PC-9 (cell line): ENCODE measurements at regions of chr2 and their contacts with region 1.

Region 1: GRCh38 chr2:223760838-223761502 is 76.4 kb downstream of the AP1S3 start:
- DNase-seq: peak; percentile 91 to 99
- H3K4me3 ChIP-seq: peak overlapping the region; percentile 42; the same call in 1 of the 2 replicates
- H3K27ac ChIP-seq: peak overlapping the region; percentile 96
- H3K4me1 ChIP-seq: peaks cover 42% of the 10 kb centered on the region
- H3K27me3 ChIP-seq: no peaks in the 10 kb centered on the region
- CTCF ChIP-seq: peak; percentile 60

Region 2: GRCh38 chr2:222976521-222977076 is 784.4 kb before region 1 on chr2:
- CTCF ChIA-PET with region 1: interaction called, 7 read pairs
- POLR2A ChIA-PET with region 1: no interaction called
- intact Hi-C with region 1: loop called (anchors 10 kb)
- DNase-seq: peak in 1 of 2 experiments; percentile 83
- H3K4me3 ChIP-seq: no peak overlapping the region
- H3K27ac ChIP-seq: no peak overlapping the region
- H3K4me1 ChIP-seq: peaks cover 42% of the 10 kb centered on the region
- H3K27me3 ChIP-seq: no peaks in the 10 kb centered on the region
- CTCF ChIP-seq: no peak

Region 3: DNA sequence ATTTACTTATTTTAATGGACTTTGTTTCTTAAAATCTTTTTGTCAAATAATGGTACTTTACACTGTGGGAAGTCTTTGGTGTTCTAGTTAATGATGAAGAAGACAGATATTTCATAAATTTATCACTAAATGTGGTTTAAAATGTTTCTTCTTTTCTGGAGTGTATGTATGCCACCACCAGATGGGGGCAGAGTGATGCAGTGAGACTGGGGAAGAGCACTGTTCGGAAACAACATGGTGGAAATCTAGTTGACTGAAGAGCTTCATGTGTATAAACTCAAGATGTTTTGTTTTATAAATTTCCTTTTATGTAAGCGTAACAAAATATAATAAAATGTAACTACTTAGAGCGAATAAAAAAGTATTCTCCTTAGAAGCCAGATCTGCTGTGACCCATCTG is 513.8 kb before region 1 on chr2:
- CTCF ChIA-PET with region 1: interaction called, 5 read pairs
- POLR2A ChIA-PET with region 1: no interaction called
- intact Hi-C with region 1: loop called (anchors 1 kb)
- DNase-seq: peak in 1 of 2 experiments; percentile 47
- H3K4me3 ChIP-seq: no peak overlapping the region
- H3K27ac ChIP-seq: no peak overlapping the region
- H3K4me1 ChIP-seq: no peaks in the 10 kb centered on the region
- H3K27me3 ChIP-seq: no peaks in the 10 kb centered on the region
- CTCF ChIP-seq: peak; percentile 93

Region 4: GRCh38 chr2:223477318-223477717 is 283.7 kb before region 1 on chr2:
- CTCF ChIA-PET with region 1: no interaction called
- POLR2A ChIA-PET with region 1: no interaction called
- intact Hi-C with region 1: no loop called
- DNase-seq: no peak
- H3K4me3 ChIP-seq: no peak overlapping the region
- H3K27ac ChIP-seq: no peak overlapping the region
- H3K4me1 ChIP-seq: no peaks in the 10 kb centered on the region
- H3K27me3 ChIP-seq: no peaks in the 10 kb centered on the region
- CTCF ChIP-seq: no peak

Region 5: DNA sequence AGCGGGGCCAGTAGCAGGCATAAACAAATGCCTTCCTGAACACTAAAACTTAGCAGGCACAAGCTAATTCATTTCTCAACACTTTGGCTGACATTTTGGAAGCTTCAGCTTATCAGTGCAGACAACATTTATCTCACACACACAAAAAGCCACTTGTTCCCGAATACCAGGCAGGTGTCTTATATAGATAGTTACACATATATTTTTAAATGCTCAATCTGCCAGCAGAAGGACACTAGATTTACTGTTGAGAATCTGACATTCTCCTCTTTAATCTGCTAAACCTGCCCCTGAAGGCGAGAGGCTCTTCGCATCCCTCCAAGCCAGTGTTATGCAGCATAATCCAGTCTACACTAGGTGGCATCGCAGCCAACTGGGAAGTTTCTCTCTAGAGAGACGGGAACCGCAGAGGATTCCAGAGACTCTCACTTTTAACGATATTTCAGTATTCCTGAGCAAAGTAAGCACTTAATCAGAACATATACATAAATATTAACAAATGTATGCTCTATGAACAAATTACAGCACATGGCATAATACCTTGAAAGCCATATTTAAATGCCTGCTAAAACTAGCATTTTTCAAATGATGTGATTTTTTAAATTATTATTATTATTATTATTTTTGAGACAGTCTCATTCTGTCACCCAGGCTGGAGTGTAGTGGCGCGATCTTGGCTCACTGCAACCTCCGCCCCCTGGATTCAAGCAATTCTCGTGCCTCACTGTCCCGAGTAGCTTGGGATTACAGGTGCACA is 68.6 kb before region 1 on chr2:
- CTCF ChIA-PET with region 1: interaction called, 7 read pairs
- POLR2A ChIA-PET with region 1: no interaction called
- intact Hi-C with region 1: loop called (anchors 1 kb)
- DNase-seq: peak in 1 of 2 experiments; percentile 60
- H3K4me3 ChIP-seq: no peak overlapping the region
- H3K27ac ChIP-seq: no peak overlapping the region
- H3K4me1 ChIP-seq: peaks cover 15% of the 10 kb centered on the region
- H3K27me3 ChIP-seq: no peaks in the 10 kb centered on the region
- CTCF ChIP-seq: peak; percentile 79

Region 6: DNA sequence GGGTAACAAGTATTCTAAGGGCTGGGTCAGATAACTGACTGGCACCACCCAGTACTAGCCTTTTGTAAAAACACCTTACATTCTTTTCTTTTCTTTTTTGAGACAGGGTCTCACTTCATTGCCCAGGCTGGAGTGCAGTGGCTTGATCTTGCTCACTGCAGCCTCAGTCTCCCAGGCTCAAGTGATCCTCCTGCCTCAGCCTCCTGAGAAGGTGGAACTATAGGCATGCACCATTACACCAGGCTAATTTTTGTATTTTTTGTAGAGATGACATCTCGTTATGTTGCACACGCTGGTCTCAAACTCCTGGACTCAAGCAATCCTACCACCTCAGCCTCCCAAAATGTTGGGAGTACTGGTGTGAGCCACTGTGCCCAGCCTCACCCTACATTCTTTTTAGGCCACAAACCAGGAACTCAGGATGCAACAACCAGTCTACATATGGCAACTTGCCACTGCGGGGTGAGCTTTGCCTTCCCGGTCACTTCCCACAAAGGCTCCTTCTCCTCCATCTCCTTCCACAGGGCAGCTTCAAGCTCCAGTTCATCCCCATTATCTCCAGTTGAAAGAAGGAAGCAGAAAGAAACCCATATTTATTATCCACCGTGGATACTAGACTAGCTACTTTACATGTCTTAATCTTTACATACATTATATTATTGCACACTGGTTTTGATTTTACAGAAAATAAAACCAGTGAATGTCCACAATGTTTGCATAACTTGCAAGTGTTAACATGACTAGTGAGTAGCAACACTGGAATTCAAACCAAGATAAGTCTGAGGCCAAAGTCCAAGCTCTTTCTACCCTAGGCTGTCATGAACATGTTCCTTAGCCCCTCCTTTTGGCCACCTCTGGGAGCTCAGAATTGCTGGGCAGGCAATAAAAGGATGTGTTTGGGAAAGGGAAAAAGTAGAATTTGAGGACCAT is 100.1 kb after region 1 on chr2:
- CTCF ChIA-PET with region 1: interaction called, 7 read pairs
- POLR2A ChIA-PET with region 1: interaction called, 8 read pairs
- intact Hi-C with region 1: loop called (anchors 1 kb)
- DNase-seq: peak; percentile 92 to 98
- H3K4me3 ChIP-seq: no peak overlapping the region; the same call in 1 of the 2 replicates
- H3K27ac ChIP-seq: peak overlapping the region; percentile 85
- H3K4me1 ChIP-seq: peaks cover 51% of the 10 kb centered on the region
- H3K27me3 ChIP-seq: no peaks in the 10 kb centered on the region
- CTCF ChIP-seq: peak; percentile 67

Region 7: DNA sequence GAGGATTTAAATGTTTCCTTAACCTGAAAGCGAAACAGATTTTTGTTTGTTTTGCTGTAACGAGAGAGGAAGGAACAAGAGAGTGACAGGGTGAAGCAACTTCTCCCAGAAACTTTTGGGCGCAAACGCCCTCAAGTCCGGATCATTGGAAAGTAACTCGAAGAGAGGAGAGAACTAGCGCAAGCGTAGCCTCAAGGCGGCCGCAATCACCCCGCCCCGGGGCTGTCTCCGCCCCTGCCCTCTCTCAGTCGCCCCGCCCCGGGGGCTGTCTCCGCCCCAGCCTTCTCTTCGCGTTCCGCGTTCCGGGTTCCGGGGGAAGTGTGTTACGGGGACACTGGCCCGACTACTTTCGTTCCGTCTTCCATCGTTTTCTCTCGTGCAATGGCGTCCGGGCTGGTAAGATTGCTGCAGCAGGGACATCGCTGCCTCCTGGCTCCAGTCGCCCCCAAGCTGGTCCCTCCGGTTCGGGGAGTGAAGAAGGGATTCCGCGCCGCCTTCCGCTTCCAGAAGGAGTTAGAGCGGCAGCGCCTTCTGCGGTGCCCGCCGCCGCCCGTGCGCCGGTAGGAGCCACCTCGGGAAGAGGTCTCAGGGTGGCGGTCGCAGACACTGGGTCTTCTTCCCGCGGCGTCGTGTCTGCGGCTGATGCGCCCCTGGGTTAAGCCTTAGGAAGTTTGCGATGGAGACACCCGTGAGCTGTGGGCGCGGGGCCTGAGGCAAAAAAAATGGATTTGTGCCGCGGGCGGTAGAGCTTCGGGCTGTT is 196.3 kb after region 1 on chr2 and contains the start of gene MRPL44:
- CTCF ChIA-PET with region 1: no interaction called
- POLR2A ChIA-PET with region 1: no interaction called
- intact Hi-C with region 1: loop called (anchors 1 kb)
- DNase-seq: peak; percentile 92 to 100
- H3K4me3 ChIP-seq: peak within 1 kb of the TSS; percentile 81
- H3K27ac ChIP-seq: peak within 1 kb of the TSS; percentile 73
- H3K4me1 ChIP-seq: peaks cover 37% of the 10 kb centered on the region
- H3K27me3 ChIP-seq: no peaks in the 10 kb centered on the region
- CTCF ChIP-seq: 0 out of 2 replicates have a peak, but pooled peaks have one; percentile 7
- total RNA-seq, gene MRPL44: 66.4 and 76.6 TPM in 2 replicates